ENCODE measurements at regions of chr18 and their contacts with region 1.

Region 1: DNA sequence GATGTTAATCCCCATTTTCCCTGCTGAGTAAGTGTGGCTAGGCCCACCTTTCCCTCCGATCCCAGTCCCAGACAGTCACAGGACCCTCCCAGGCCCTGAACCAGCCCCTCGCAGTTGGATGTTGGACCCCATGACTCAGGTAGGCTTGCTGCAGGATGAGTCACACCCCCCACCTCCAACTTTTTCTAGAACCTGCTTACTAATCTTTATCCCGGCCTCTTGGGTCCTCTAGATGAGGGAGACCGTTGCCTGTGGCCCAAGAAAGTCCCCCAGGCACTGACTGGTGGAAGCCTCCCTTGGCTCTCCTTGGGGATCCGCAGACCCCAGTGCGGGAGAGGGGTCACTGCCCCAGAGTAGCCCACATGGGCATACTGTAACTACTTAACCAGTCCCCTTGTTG is 98.5 kb downstream of the SMAD7 start:
- DNase-seq: no peak
- H3K4me3 ChIP-seq: no peak overlapping the region
- H3K27ac ChIP-seq: no peak overlapping the region
- H3K4me1 ChIP-seq: peaks cover 20% of the 10 kb centered on the region
- H3K27me3 ChIP-seq: no peaks in the 10 kb centered on the region
- CTCF ChIP-seq: no peak
- EP300 ChIP-seq: no peak
- POLR2A ChIP-seq: no peak

Region 2: DNA sequence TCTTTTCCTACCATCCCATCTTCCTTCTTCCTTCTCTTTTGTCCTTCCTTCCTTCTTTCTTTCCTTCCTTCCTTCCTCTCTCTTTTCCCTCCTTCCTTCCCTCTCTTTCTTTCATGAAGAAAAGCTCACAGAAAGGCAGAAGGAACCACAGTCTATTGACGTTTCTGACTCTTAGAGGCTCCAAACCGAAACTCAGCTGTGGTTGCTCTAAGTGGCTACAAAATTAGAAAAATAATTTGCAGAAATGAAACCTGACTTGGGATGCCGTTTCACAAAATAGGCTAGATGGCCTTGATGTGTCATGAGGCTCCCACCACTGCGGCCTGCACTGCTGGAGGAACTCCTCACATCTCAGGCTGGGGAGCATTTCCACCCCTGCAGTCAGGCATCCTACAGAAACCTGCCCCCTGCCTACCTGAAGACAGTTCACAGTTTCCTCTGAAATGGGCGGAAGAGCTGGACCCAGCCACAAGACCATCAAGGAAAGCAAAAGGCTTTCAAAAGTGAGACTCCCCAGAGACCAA is 67.1 kb before region 1 on chr18:
- intact Hi-C with region 1: loop called in 1 of 4 experiments (anchors 2 kb)
- DNase-seq: peak in 2 of 5 donors; percentile 12 to 29
- H3K4me3 ChIP-seq: no peak overlapping the region
- H3K27ac ChIP-seq: no peak overlapping the region
- H3K4me1 ChIP-seq: peaks cover 24% of the 10 kb centered on the region
- H3K27me3 ChIP-seq: no peaks in the 10 kb centered on the region
- CTCF ChIP-seq: no peak
- EP300 ChIP-seq: no peak
- POLR2A ChIP-seq: no peak

Region 3: DNA sequence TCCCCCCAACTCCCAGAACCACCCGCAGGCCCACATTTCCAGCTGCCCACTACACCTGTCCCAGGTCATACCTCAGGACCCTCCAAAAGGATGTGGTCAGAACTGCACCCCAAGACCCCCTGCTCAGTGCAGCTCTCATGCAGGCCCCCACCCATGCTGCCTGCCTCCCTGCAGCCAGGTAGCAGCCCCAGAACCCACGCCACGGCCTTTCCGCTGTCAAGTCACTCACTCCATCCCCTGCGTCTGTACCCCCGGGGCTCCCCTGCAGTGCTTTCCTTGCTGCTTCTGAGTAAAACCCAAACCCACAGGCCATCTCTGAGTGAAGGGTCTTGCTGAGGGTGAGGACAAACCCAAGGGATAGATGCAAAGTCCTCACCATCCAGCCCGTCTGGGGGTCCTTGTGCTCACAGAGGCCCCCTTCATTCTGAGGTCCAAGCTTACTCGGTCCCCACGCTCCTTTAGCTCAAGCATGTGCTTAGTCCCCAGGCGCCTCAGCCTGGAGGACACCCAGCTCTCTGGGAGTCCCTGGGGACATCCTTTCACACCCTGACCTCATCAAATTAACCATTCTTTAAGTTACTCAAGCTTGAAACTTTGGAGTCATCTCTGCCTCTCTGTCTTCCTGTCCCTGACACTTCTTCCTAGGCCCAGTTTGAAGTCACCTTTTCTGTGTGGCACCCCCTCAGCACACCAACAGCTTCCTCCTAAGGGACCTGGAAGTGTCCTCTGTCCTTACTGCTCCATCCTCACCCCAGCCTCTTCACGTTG is 31.6 kb before region 1 on chr18:
- intact Hi-C with region 1: no loop called
- DNase-seq: peak in 3 of 5 donors; percentile 6 to 24 (median 18)
- H3K4me3 ChIP-seq: no peak overlapping the region
- H3K27ac ChIP-seq: no peak overlapping the region
- H3K4me1 ChIP-seq: peaks cover 9% of the 10 kb centered on the region
- H3K27me3 ChIP-seq: no peaks in the 10 kb centered on the region
- CTCF ChIP-seq: no peak
- EP300 ChIP-seq: no peak
- POLR2A ChIP-seq: no peak

Measured in ovary (tissue), 10 donors.